ENCODE measurements at regions of chr17 and their contacts with region 1.

Region 1: GRCh38 chr17:76506408-76507349 is 5.5 kb upstream of the RHBDF2 start:
- DNase-seq: peak; percentile 77 to 86
- H3K4me3 ChIP-seq: no peak overlapping the region
- H3K27ac ChIP-seq: no peak overlapping the region
- H3K4me1 ChIP-seq: no peaks in the 10 kb centered on the region
- H3K27me3 ChIP-seq: no peaks in the 10 kb centered on the region
- CTCF ChIP-seq: peak; percentile 88 to 98 (median 93)
- POLR2A ChIP-seq: no peak

Region 2: DNA sequence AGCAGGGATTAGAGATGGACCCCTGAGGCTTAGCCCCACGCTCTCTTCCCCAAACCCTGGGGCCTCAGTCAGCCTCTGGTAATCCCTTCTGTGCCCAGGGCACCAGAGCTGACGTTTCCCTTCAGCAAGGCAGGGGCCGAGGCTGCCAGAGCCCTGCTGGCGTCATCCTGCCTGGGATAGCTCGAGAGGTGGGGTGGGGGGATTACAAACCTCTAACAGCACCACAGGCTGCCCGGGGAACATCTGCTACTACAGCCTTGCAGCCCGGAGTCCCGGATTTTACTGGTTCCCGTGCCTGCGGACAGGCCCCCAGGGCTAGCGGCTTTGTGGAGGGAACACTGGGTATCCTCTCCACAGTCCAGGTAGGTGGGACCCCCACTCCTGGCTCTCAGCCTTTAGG is 39.3 kb before region 1 on chr17 and contains the start of gene AANAT:
- intact Hi-C with region 1: loop called (anchors 2 kb)
- DNase-seq: no peak
- H3K4me3 ChIP-seq: no peak within 1 kb of the TSS
- H3K27ac ChIP-seq: no peak within 1 kb of the TSS
- H3K4me1 ChIP-seq: no peaks in the 10 kb centered on the region
- H3K27me3 ChIP-seq: no peaks in the 10 kb centered on the region
- CTCF ChIP-seq: no peak
- POLR2A ChIP-seq: no peak
- total RNA-seq, gene AANAT: not detected